HAP-1 (cell line): ENCODE measurements at regions of chr1 and their contacts with region 1.

Region 1: DNA sequence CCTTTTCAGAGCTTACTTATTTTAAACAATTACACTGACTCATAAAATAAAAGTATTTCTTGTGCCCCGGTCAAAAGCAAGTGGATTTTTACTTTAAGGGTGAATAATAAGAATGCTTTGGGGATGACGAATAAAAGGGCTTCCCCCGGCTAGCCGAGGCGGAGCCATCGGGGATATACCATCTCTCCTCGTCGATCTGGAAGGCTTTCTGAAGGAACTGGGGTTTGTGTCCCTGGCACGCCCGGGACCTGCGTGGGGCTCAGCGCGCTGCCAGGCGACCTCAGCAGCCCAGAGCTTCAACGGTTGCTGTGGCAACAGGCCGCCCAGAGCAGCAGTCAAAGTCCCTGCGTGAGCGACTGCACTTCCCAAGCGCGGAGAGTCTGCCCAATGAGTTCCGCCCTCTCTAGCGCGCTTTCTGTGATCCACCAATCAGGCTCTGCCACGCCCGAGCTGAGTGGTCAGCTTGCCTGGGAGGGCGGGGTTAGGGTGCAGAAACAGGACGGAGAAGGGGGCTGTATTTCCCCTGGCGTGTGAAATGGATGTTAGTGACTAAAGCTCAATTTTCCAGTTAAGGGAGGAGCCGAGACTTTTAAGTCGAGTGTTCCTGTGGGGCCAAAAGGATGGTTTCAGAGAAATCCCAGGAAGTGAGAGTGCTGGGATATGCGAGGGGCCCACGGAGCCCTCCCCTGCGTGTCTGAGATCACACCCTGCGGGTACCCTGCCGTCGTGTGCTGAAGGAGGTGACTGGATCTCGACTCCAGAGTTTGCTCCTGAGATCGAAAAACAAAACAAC is 33.0 kb upstream of the MGST3 start:
- DNase-seq: peak; percentile 90 to 97
- H3K4me3 ChIP-seq: peak overlapping the region; percentile 36
- H3K4me1 ChIP-seq: peaks cover 6% of the 10 kb centered on the region
- H3K27me3 ChIP-seq: peaks cover 29% of the 10 kb centered on the region

Region 2: GRCh38 chr1:165129568-165130164 is 468.4 kb before region 1 on chr1:
- in situ Hi-C with region 1: loop called (anchors 10 kb)
- DNase-seq: peak; percentile 38 to 81
- H3K4me3 ChIP-seq: no peak overlapping the region
- H3K4me1 ChIP-seq: no peaks in the 10 kb centered on the region
- H3K27me3 ChIP-seq: peaks cover 38% of the 10 kb centered on the region

Region 3: DNA sequence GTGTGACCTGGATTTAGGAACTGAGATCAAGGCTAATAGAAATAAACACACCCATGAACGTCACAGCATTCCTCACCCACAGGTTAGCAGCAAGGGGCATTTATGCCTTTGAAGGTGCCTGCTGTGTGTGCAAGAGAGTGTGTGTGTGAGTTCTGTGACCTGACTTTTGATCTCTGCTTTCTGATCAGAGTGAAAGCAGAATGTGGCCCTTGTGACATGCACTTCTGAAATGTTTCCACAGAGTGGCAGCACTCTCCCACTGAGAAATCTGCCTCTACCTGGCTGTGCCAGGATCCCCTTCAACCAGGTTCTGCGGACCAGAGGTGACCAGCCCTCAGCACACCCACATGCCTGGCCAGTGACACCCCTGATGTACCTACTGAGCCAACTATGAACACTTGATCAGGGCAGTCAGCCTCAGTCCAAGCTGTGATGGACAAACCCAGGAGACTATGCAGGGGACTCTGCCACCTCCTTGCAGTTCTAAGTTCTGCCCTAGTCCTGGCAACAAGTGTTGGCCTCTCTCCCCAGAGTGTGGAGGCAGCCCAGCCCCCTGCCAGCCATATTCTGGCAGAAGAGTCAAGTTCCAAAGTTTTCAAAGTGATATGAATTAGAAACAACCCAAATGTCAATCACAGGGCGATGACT is 194.1 kb before region 1 on chr1:
- in situ Hi-C with region 1: loop called (anchors 5 kb)
- DNase-seq: peak in 1 of 2 experiments; percentile 37
- H3K4me3 ChIP-seq: no peak overlapping the region
- H3K4me1 ChIP-seq: no peaks in the 10 kb centered on the region
- H3K27me3 ChIP-seq: no peaks in the 10 kb centered on the region

Region 4: DNA sequence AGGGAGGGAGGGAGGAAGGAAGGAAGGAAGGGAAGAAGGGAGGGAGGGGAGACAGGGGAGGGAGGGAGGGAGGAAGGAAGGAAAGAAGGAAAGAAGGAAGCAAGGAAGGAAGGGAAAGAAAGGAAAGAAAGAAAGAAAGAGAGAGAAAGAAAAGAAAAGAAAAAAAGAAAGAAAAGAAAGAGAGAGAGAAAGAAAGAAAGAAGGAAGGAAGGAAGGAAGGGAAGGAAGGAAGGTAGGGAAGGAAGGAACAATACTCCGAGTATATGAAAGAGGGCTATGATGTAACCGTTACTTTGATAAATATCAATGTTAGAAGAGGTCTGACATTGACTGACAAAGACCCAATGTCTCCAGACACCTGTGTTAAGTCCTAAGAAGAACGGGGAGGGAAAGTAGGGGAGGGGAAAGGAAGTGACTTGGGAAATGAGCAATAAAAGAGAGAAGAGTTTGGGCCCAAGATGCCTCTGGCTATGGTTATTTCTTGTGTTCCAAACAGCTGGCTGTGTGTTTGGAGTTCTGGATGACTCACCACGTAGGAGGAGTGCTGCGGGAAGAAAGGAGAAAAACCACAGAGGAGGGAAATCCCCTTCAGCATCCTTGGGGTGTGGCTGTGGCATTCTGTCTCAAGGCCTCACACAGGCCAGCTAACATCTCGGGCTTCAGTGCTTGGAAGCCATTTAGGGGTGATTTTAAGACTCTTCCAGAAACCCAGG is 116.1 kb before region 1 on chr1:
- in situ Hi-C with region 1: no loop called
- DNase-seq: no peak
- H3K4me3 ChIP-seq: no peak overlapping the region
- H3K4me1 ChIP-seq: no peaks in the 10 kb centered on the region
- H3K27me3 ChIP-seq: no peaks in the 10 kb centered on the region

Region 5: DNA sequence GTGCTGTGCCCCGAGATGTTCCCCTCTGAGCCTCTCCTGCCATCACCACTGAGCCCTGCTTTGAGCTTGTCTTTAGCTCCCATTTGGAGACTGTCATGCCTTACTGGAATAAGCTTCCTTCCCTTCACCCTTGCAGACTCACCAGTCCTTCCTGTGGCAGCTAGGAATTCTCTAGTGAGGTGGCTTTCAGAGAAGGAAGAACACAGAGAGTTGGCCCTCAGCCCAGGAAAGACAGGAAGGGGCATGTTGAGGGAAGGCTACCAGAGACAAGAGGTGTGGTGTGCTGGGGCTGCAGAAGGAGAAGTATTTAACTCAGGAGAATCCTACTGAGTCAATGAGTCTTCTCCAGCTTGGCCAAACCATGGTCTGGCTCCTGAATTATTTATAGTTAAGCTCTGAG is 305.6 kb after region 1 on chr1:
- in situ Hi-C with region 1: loop called (anchors 5 kb)
- DNase-seq: no peak
- H3K4me3 ChIP-seq: no peak overlapping the region
- H3K4me1 ChIP-seq: no peaks in the 10 kb centered on the region
- H3K27me3 ChIP-seq: no peaks in the 10 kb centered on the region